ENCODE measurements at regions of chr1 and their contacts with region 1.

Region 1: GRCh38 chr1:203625628-203626019 is 1.0 kb upstream of the ATP2B4 start:
- DNase-seq: no peak
- ATAC-seq: peak; percentile 23 to 33 (median 28)
- H3K4me3 ChIP-seq: no peak overlapping the region
- H3K27ac ChIP-seq: peak overlapping the region; percentile 58
- H3K4me1 ChIP-seq: peaks cover 22% of the 10 kb centered on the region
- H3K27me3 ChIP-seq: peaks cover 0 to 2% (median 0%) of the 10 kb centered on the region in 3 donors
- CTCF ChIP-seq: no peak

Region 2: GRCh38 chr1:203592156-203592555 is 33.5 kb before region 1 on chr1:
- intact Hi-C with region 1: no loop called
- DNase-seq: no peak
- ATAC-seq: peak in 1 of 4 donors; percentile 48
- H3K4me3 ChIP-seq: no peak overlapping the region
- H3K27ac ChIP-seq: no peak overlapping the region
- H3K4me1 ChIP-seq: no peaks in the 10 kb centered on the region
- H3K27me3 ChIP-seq: no peaks in the 10 kb centered on the region
- CTCF ChIP-seq: no peak

Region 3: DNA sequence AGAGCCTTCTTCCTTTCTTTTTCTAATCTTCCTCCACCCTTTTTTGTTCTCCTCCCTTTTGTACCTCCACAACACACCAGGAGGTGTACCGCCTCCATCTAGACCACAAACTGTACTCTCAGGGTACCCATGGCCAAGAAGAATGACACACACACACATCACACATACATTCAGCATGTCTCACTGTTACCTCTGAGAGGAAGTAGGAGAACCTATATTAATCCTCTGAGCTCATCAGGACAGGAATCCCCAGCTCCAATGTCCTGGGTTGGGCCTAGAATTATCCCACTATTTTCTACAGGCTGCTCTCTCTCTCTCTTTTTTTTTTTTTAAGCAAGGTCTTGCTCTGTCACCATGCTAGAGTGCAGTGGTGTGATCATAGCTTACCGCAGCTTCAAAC is 37.7 kb after region 1 on chr1:
- intact Hi-C with region 1: loop called (anchors 5 kb)
- DNase-seq: no peak
- ATAC-seq: peak; percentile 98 to 99 (median 98)
- H3K4me3 ChIP-seq: no peak overlapping the region
- H3K27ac ChIP-seq: peak overlapping the region; percentile 84
- H3K4me1 ChIP-seq: peaks cover 32% of the 10 kb centered on the region
- H3K27me3 ChIP-seq: no peaks in the 10 kb centered on the region
- CTCF ChIP-seq: no peak

Region 4: GRCh38 chr1:203695116-203695515 is 69.5 kb after region 1 on chr1:
- intact Hi-C with region 1: loop called (anchors 2 to 5 kb)
- DNase-seq: peak; percentile 22 to 60
- ATAC-seq: no peak
- H3K4me3 ChIP-seq: no peak overlapping the region
- H3K27ac ChIP-seq: no peak overlapping the region
- H3K4me1 ChIP-seq: peaks cover 27% of the 10 kb centered on the region
- H3K27me3 ChIP-seq: no peaks in the 10 kb centered on the region
- CTCF ChIP-seq: no peak

Region 5: DNA sequence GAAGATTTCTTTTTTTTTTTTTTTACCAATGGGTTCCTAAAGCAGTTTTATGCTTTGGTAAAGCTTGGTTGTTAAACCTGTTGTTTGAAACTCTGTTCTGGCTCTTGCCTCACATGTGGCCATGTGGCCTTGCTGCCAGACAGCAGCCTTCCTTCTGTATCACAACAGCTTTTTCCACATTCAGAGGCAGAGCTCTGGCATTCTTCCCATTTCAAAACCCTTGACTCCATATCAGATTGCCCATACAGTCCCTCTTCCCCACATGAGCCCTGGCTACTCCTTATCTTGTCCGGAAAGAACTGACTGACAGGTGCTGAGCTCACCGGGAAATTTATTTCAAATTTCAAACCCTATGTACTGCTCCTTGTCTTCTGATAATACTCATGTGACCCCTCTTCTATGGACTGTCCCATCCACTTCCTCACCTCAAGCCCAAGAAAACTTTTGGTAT is 100.8 kb after region 1 on chr1:
- intact Hi-C with region 1: no loop called
- DNase-seq: no peak
- ATAC-seq: peak in 3 of 4 donors; percentile 15 to 35 (median 34)
- H3K4me3 ChIP-seq: no peak overlapping the region
- H3K27ac ChIP-seq: no peak overlapping the region
- H3K4me1 ChIP-seq: no peaks in the 10 kb centered on the region
- H3K27me3 ChIP-seq: no peaks in the 10 kb centered on the region
- CTCF ChIP-seq: no peak

Measured in psoas muscle (tissue), 8 donors.